CD4-positive, alpha-beta T cell (primary cell): ENCODE measurements at regions of chr1 and their contacts with region 1.

Region 1: GRCh38 chr1:27004471-27005165 is 8.0 kb downstream of the TENT5B start:
- DNase-seq: no peak
- ATAC-seq: no peak
- H3K4me3 ChIP-seq: no peak overlapping the region
- H3K4me3 Mint-ChIP-seq: no peak overlapping the region
- H3K27ac ChIP-seq: no peak overlapping the region
- H3K27ac Mint-ChIP-seq: no peak overlapping the region
- H3K4me1 ChIP-seq: no peaks in the 10 kb centered on the region
- H3K4me1 Mint-ChIP-seq: no peaks in the 10 kb centered on the region
- H3K27me3 ChIP-seq: peaks cover 0 to 5% of the 10 kb centered on the region in 2 experiments
- H3K27me3 Mint-ChIP-seq: peaks cover 10% of the 10 kb centered on the region
- CTCF ChIP-seq: no peak

Region 2: GRCh38 chr1:27090911-27091310 is 86.3 kb after region 1 on chr1:
- CTCF ChIA-PET with region 1: no interaction called
- POLR2A ChIA-PET with region 1: no interaction called
- intact Hi-C with region 1: loop called in 1 of 2 experiments (anchors 2 kb)
- DNase-seq: no peak
- ATAC-seq: no peak
- H3K4me3 ChIP-seq: no peak overlapping the region
- H3K4me3 Mint-ChIP-seq: no peak overlapping the region
- H3K27ac ChIP-seq: no peak overlapping the region
- H3K27ac Mint-ChIP-seq: no peak overlapping the region
- H3K4me1 ChIP-seq: no peaks in the 10 kb centered on the region
- H3K4me1 Mint-ChIP-seq: no peaks in the 10 kb centered on the region
- H3K27me3 ChIP-seq: no peaks in the 10 kb centered on the region
- H3K27me3 Mint-ChIP-seq: no peaks in the 10 kb centered on the region
- CTCF ChIP-seq: no peak